HEK293 (cell line): ENCODE measurements at regions of chr14 and their contacts with region 1.

Region 1: GRCh38 chr14:100417466-100417865 is 94.3 kb downstream of the SLC25A47 start:
- H3K4me3 ChIP-seq: no peak overlapping the region
- H3K27ac ChIP-seq: no peak overlapping the region
- H3K4me1 ChIP-seq: no peaks in the 10 kb centered on the region; the same call in 1 of the 2 replicates
- CTCF ChIP-seq: peak; percentile 61

Region 2: GRCh38 chr14:100203949-100204834 is 213.3 kb before region 1 on chr14:
- CTCF ChIA-PET with region 1: no interaction called
- POLR2A ChIA-PET with region 1: no interaction called
- H3K4me3 ChIP-seq: no peak overlapping the region
- H3K27ac ChIP-seq: no peak overlapping the region
- H3K4me1 ChIP-seq: no peaks in the 10 kb centered on the region
- CTCF ChIP-seq: no peak

Region 3: DNA sequence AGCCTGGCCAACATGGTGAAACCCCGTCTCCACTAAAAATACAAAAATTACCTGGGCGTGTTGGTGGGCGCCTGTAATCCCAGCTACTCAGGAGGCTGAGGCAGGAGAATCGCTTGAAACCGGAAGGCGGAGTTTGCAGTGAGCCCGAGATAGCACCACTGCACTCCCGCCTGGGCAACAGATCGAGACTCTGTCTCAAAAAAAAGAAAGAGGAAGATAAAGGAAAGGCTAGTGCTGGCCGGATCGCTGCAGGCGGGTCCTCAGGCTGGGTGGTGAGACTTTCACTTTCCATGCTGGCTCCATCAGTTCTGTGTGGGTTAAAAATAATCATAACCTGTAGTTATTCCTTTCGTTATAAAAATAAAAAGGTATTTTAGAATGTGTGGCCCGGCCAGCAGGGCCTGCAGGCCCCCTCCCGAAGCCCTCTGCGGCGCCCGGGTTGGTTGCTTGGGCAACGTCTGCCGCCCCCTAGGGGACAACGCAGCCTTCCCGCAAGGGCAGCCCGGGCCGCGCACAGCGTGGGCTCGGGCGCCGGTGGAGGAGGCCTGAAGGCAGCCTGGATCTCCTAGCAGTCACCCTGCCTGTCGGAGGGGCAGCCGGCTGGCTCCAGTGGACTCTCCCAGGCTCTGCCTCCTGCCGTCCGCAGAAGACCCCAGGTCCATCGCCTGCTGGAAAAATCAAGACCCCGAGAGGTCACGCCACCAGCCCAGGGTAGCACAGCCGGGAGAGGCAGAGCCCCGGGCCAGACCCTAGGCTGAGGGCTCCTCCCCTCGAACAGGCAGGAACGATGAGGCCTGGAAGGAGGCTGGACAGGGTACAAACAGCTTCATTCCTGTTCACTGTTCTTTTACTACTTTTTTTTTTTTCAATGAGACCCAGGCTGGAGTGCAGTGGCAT is 99.3 kb before region 1 on chr14:
- CTCF ChIA-PET with region 1: no interaction called
- POLR2A ChIA-PET with region 1: no interaction called
- H3K4me3 ChIP-seq: no peak overlapping the region
- H3K27ac ChIP-seq: no peak overlapping the region
- H3K4me1 ChIP-seq: no peaks in the 10 kb centered on the region
- CTCF ChIP-seq: no peak

Region 4: GRCh38 chr14:100446572-100446971 is 29.1 kb after region 1 on chr14:
- CTCF ChIA-PET with region 1: no interaction called
- POLR2A ChIA-PET with region 1: no interaction called
- H3K4me3 ChIP-seq: no peak overlapping the region
- H3K27ac ChIP-seq: no peak overlapping the region
- H3K4me1 ChIP-seq: no peaks in the 10 kb centered on the region; the same call in 1 of the 2 replicates
- CTCF ChIP-seq: no peak

Region 5: GRCh38 chr14:100654814-100655740 is 237.6 kb after region 1 on chr14:
- CTCF ChIA-PET with region 1: interaction called, 12 read pairs
- POLR2A ChIA-PET with region 1: no interaction called
- H3K4me3 ChIP-seq: no peak overlapping the region; the same call in 1 of the 2 replicates
- H3K27ac ChIP-seq: no peak overlapping the region
- H3K4me1 ChIP-seq: no peaks in the 10 kb centered on the region
- CTCF ChIP-seq: no peak